HepG2 (cell line): ENCODE measurements at regions of chr21 and their contacts with region 1.

Region 1: DNA sequence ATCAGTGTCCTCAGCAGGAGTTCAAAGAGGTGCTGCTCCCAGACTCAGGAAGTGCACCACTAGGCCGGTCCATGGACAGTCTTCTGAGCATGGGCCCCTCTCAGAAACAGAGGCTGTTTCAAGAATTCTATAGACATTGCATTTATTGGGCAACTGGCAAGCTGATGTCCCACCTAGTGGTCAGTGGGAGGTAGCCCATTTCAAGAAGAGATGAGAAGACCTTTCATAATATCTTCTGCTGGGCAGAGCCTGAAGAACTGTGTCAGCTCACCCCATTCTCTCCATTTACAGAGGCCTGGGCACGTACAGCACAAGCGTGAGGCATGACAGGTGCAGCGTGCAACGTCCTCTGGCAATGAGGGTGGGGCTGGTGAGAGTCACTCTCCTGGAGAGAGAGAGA is 216.0 kb downstream of the DYRK1A start:
- DNase-seq: peak; percentile 57
- ATAC-seq: peak; percentile 97
- H3K4me3 ChIP-seq: no peak overlapping the region
- H3K27ac ChIP-seq: no peak overlapping the region
- H3K4me1 ChIP-seq: no peaks in the 10 kb centered on the region
- H3K27me3 ChIP-seq: no peaks in the 10 kb centered on the region; a peak in 1 of 5 replicates
- CTCF ChIP-seq: peak; percentile 78
- EP300 ChIP-seq: no peak
- POLR2A ChIP-seq: no peak
- RAD21 ChIP-seq: peak; percentile 66

Region 2: DNA sequence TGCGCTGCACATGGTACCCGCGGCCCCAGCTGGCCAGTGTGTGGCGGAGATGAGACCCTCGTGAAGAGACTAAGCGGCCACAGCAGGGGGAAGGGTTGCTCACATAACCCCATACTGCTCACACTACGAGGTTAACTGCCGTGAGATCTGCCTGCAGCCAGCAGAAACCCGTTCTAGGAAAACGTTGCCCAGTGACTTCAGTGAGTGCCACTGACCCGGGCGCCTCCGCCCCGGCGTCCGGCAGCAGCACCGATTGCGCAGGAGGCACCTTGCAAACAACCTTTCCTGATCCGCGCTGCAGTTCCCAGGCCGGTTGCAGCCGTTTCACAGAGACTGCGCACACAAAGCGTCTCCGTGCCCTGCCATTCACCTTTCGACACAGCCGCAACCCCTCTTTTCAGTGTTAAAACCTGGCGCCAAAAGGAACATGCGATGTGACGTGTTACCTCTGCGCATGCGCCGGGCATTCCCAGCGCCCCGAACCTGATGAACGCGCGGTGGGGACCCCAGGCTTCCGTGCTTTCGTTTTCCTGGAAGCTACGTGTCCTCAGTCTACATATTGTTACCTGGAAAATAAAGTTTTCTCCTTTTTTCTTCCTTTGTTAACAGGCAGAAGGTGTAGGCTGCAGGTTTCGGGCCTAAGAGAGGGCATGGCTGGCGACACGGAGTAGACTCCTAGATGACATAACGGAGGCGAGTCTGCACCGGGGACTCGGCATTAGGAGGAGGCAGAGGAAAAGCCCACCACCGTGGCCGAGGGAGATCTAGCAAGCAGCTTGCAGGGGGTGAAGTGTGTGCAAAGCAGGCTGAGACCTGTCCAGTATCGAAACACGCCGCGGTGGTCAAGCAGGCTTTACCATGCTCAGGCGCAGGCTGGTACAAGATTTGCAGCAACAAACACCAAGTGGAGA is 324.4 kb before region 1 on chr21:
- CTCF ChIA-PET with region 1: no interaction called
- POLR2A ChIA-PET with region 1: no interaction called
- in situ Hi-C with region 1: no loop called
- intact Hi-C with region 1: loop called (anchors 5 kb)
- DNase-seq: peak; percentile 84
- ATAC-seq: peak; percentile 85
- H3K4me3 ChIP-seq: peak overlapping the region; percentile 55 to 82 (median 66)
- H3K27ac ChIP-seq: peak overlapping the region; percentile 91
- H3K4me1 ChIP-seq: peaks cover 40% of the 10 kb centered on the region
- H3K27me3 ChIP-seq: no peaks in the 10 kb centered on the region
- CTCF ChIP-seq: peak; percentile 34; the same call in 1 of the 2 replicates
- EP300 ChIP-seq: no peak; a peak in 1 of 4 replicates
- POLR2A ChIP-seq: peak; percentile 71 to 78
- RAD21 ChIP-seq: no peak; the same call in 1 of the 2 replicates

Region 3: GRCh38 chr21:37460196-37460595 is 122.4 kb before region 1 on chr21:
- CTCF ChIA-PET with region 1: no interaction called
- POLR2A ChIA-PET with region 1: no interaction called
- in situ Hi-C with region 1: no loop called
- intact Hi-C with region 1: loop called (anchors 1 kb)
- DNase-seq: no peak
- ATAC-seq: no peak
- H3K4me3 ChIP-seq: no peak overlapping the region
- H3K27ac ChIP-seq: no peak overlapping the region
- H3K4me1 ChIP-seq: peaks cover 47% of the 10 kb centered on the region
- H3K27me3 ChIP-seq: no peaks in the 10 kb centered on the region
- CTCF ChIP-seq: peak; percentile 17; the same call in 1 of the 2 replicates
- EP300 ChIP-seq: no peak
- POLR2A ChIP-seq: no peak
- RAD21 ChIP-seq: no peak